Caco-2 (cell line): ENCODE measurements at regions of chr4 and their contacts with region 1.

Region 1: DNA sequence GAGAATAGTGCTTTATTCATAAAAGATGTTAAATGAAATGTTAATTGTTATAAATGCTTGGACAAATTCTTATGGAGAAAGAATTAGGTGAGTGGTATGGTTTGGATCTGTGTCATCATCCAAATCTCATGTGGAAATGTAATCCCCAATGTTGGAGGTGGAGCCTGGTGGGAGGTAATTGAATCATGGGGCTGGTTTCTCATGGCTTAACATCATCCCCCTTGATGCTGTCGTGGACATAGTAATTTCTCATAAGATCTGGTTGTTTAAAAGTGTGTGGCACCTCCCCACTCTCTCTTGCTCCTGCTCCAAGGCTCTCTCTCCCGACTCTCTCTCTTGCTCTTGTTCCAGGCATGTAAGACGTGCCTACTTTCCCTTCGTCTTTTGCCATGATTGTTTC is 22.5 kb downstream of the GYPE start:
- DNase-seq: no peak
- H3K4me3 ChIP-seq: no peak overlapping the region
- H3K4me3 Mint-ChIP-seq: no peak overlapping the region
- H3K27ac Mint-ChIP-seq: no peak overlapping the region
- H3K4me1 ChIP-seq: peaks cover 3% of the 10 kb centered on the region; the same call in 1 of the 2 replicates
- H3K4me1 Mint-ChIP-seq: no peaks in the 10 kb centered on the region
- H3K27me3 ChIP-seq: no peaks in the 10 kb centered on the region
- H3K27me3 Mint-ChIP-seq: no peaks in the 10 kb centered on the region
- CTCF ChIP-seq: no peak

Region 2: DNA sequence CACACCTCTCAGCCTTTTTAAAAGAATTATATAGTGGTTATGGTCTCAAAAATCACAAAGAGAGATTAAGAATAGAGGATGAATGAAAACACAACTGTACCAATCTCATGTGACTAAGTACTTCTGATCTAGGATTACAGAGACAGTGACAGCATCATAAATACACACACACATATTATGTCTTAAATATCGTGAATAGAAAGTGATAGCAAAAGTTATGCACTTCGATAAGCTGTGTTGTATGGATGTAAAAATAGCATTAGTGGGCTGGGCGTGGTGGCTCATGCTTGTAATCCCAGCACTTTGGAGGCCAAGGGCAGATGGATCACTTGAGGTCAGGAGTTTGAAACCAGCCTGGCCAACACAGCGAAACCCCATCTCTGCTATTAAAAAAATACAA is 232.6 kb after region 1 on chr4:
- CTCF ChIA-PET with region 1: no interaction called
- POLR2A ChIA-PET with region 1: no interaction called
- intact Hi-C with region 1: loop called (anchors 5 kb)
- DNase-seq: no peak
- H3K4me3 ChIP-seq: no peak overlapping the region
- H3K4me3 Mint-ChIP-seq: no peak overlapping the region
- H3K27ac Mint-ChIP-seq: no peak overlapping the region
- H3K4me1 ChIP-seq: no peaks in the 10 kb centered on the region
- H3K4me1 Mint-ChIP-seq: no peaks in the 10 kb centered on the region
- H3K27me3 ChIP-seq: no peaks in the 10 kb centered on the region
- H3K27me3 Mint-ChIP-seq: no peaks in the 10 kb centered on the region
- CTCF ChIP-seq: no peak